ENCODE measurements at regions of chr13 and their contacts with region 1.

Region 1: GRCh38 chr13:28658796-28659620 is at the start of gene POMP:
- DNase-seq: peak; percentile 98
- H3K4me3 Mint-ChIP-seq: peak within 1 kb of the TSS; percentile 97
- H3K27ac Mint-ChIP-seq: peak within 1 kb of the TSS; percentile 99
- H3K4me1 Mint-ChIP-seq: peaks cover 49% of the 10 kb centered on the region
- H3K27me3 Mint-ChIP-seq: no peaks in the 10 kb centered on the region
- total RNA-seq, gene POMP: 152 and 161 TPM in 2 replicates

Region 2: DNA sequence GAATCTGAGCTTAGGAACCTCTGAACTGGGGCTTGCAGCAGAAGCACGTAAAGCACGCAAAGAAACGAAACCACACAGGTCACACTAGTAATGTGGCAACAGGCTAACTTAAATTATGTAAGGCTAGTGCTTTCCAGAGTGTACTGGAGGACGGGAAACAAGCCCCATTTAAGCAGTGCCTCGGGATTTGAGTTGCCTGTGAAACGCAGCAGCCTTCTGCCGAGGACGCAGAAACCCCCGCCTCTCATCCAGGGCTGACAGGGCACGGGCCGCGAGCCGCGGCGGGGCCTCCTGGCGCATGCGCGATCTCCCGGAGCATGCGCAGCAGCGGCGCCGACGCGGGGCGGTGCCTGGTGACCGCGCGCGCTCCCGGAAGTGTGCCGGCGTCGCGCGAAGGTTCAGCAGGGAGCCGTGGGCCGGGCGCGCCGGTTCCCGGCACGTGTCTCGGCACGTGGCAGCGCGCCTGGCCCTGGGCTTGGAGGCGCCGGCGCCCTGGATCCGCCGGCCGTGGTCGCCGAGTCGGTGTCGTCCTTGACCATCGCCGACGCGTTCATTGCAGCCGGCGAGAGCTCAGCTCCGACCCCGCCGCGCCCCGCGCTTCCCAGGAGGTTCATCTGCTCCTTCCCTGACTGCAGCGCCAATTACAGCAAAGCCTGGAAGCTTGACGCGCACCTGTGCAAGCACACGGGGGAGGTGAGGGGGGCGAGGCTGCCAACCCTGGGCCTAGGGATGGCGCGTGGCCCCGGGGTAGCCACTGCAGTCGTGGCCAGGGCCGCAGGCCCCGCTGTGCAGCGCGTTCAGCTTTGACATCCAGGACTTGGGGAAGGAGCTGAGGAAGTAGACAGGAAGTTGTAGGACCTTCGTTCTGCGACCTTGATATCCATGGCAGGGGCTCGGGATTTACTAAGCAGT is 1234.5 kb before region 1 on chr13 and contains the start of gene GTF3A:
- intact Hi-C with region 1: loop called (anchors 2 kb)
- DNase-seq: peak; percentile 97
- H3K4me3 Mint-ChIP-seq: peak within 1 kb of the TSS; percentile 86
- H3K27ac Mint-ChIP-seq: peak within 1 kb of the TSS; percentile 95
- H3K4me1 Mint-ChIP-seq: peaks cover 35% of the 10 kb centered on the region
- H3K27me3 Mint-ChIP-seq: no peaks in the 10 kb centered on the region
- total RNA-seq, gene GTF3A: 279 and 284 TPM in 2 replicates

Region 3: GRCh38 chr13:28268800-28269223 is 390.2 kb before region 1 on chr13:
- intact Hi-C with region 1: loop called (anchors 1 kb)
- DNase-seq: peak; percentile 63
- H3K4me3 Mint-ChIP-seq: no peak overlapping the region
- H3K27ac Mint-ChIP-seq: peak overlapping the region; percentile 55
- H3K4me1 Mint-ChIP-seq: peaks cover 13% of the 10 kb centered on the region
- H3K27me3 Mint-ChIP-seq: no peaks in the 10 kb centered on the region

Region 4: GRCh38 chr13:28494776-28495537 is 164.1 kb before region 1 on chr13 and contains the start of gene FLT1:
- intact Hi-C with region 1: loop called (anchors 2 kb)
- DNase-seq: peak; percentile 84
- H3K4me3 Mint-ChIP-seq: peak within 1 kb of the TSS; percentile 85
- H3K27ac Mint-ChIP-seq: peak within 1 kb of the TSS; percentile 72
- H3K4me1 Mint-ChIP-seq: peaks cover 21% of the 10 kb centered on the region
- H3K27me3 Mint-ChIP-seq: peaks cover 36% of the 10 kb centered on the region
- total RNA-seq, gene FLT1: 46.3 and 46.7 TPM in 2 replicates

Region 5: GRCh38 chr13:28636674-28637317 is 22.2 kb before region 1 on chr13:
- intact Hi-C with region 1: loop called (anchors 2 kb)
- DNase-seq: peak; percentile 85
- H3K4me3 Mint-ChIP-seq: peak overlapping the region; percentile 48
- H3K27ac Mint-ChIP-seq: peak overlapping the region; percentile 1
- H3K4me1 Mint-ChIP-seq: peaks cover 12% of the 10 kb centered on the region
- H3K27me3 Mint-ChIP-seq: peaks cover 25% of the 10 kb centered on the region

Region 6: GRCh38 chr13:28796938-28797257 is 137.9 kb after region 1 on chr13:
- intact Hi-C with region 1: loop called (anchors 1 kb)
- DNase-seq: no peak
- H3K4me3 Mint-ChIP-seq: no peak overlapping the region
- H3K27ac Mint-ChIP-seq: no peak overlapping the region
- H3K4me1 Mint-ChIP-seq: peaks cover 3% of the 10 kb centered on the region
- H3K27me3 Mint-ChIP-seq: peaks cover 21% of the 10 kb centered on the region